ENCODE measurements at regions of chr10 and their contacts with region 1.

Region 1: GRCh38 chr10:96513698-96514561 is at the start of gene TLL2:
- DNase-seq: peak; percentile 85 to 92
- H3K4me3 ChIP-seq: peak within 1 kb of the TSS; percentile 32 to 71 (median 66)
- H3K27ac ChIP-seq: no peak within 1 kb of the TSS; the same call in 1 of the 2 replicates
- H3K4me1 ChIP-seq: peaks cover 12 to 16% (median 13%) of the 10 kb centered on the region in 4 experiments
- H3K27me3 ChIP-seq: peaks cover 10 to 29% (median 25%) of the 10 kb centered on the region in 4 experiments
- CTCF ChIP-seq: peak; percentile 60 to 84 (median 73)
- EP300 ChIP-seq: peak in 1 of 2 experiments; percentile 66; a peak in 1 of 3 replicates
- POLR2A ChIP-seq: peak in 1 of 2 experiments; percentile 60; a peak in 1 of 3 replicates
- RAD21 ChIP-seq: peak; percentile 50 to 68
- total RNA-seq, gene TLL2: 3.0 and 3.2 TPM in 2 replicates

Region 2: DNA sequence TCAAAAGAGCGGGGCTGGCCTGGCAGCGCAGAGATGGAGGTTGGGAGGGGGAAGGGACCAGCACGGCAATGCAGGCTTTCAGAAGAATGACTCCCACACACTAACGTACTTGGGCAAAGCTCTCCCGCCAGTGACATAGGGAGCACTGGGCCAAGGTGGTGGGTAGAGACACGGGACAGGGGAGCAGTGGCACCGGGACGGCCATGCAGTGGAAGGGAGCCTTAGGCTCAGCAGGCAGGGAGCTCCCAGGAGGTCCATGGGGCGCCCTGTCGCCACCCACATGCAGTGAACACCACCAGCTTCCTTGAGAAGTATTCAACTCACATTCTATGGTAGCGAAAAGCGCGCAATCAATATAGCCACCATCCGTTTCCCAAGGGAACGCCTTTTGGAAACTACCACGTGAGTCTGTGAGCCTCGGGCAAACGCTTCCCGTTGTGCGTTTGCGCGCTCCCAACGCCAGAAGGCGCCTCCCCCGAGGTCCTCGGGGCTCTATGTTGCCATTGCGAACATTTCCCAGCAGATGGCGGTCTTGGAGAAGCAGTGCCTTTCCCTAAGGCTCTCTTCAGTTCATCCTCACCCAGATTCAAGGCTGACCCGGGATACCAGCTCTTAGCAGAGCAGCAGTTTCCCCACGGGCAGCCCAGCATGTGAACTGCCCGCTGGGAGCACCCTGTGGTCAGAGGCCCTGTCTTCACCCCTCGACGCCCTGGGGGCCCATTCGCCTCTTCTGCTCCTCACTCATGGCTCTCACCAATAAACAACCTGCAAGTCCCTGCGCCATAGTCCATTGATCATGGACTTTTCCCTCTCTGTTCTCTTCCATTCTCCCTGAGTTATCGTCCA is 138.7 kb before region 1 on chr10:
- CTCF ChIA-PET with region 1: interaction called, 187 read pairs
- POLR2A ChIA-PET with region 1: interaction called, 4 read pairs
- DNase-seq: peak; percentile 80 to 93
- H3K4me3 ChIP-seq: peak overlapping the region; percentile 30 to 56 (median 47); a peak in 7 of 8 replicates
- H3K27ac ChIP-seq: no peak overlapping the region
- H3K4me1 ChIP-seq: peaks cover 0 to 13% (median 7%) of the 10 kb centered on the region in 4 experiments; a peak in 6 of 7 replicates
- H3K27me3 ChIP-seq: peaks cover 0 to 3% (median 1%) of the 10 kb centered on the region in 4 experiments; a peak in 3 of 7 replicates
- CTCF ChIP-seq: peak; percentile 95 to 100 (median 100)
- EP300 ChIP-seq: no peak
- POLR2A ChIP-seq: no peak
- RAD21 ChIP-seq: peak; percentile 95 to 96

Region 3: DNA sequence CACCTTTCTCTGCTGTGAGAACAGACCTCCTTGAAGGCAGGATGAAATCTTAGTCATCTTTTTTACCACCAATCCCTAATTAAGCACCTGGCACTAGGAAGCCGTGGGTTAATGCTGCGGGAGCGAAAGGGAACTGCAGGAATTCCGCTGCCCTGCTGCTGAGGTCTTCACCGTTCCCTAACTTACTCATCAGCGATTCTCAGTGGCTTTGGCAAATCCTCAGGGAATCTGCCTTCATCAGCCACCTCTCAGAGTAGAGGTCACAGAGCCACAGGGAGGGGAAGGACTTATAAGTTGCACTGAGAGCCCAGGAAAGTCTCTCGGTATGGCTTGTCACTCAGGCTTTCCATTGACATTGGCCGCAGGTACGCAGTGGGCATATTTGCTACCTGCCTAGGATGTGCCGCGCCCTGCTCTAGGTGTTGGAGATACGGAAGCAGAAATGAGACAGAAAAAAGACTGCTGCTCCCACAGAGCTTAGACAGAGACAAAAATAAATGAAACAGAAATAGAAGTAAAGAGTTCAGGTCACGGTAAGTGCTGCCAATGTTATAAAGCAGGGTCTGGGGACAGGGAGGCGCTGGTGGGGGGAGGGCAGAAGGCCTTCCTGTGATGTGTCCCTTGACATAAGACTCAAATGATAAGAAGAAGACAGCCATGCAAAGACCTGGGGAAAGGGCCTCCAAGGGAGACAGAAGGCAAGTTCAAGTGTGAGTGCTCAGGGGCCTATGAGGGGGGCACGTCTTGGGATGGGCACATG is 82.5 kb before region 1 on chr10:
- CTCF ChIA-PET with region 1: interaction called, 10 read pairs
- POLR2A ChIA-PET with region 1: no interaction called
- DNase-seq: peak in 1 of 2 experiments; percentile 29
- H3K4me3 ChIP-seq: no peak overlapping the region
- H3K27ac ChIP-seq: no peak overlapping the region
- H3K4me1 ChIP-seq: peaks cover 0 to 1% (median 0%) of the 10 kb centered on the region in 4 experiments; a peak in 2 of 7 replicates
- H3K27me3 ChIP-seq: no peaks in the 10 kb centered on the region
- CTCF ChIP-seq: no peak
- EP300 ChIP-seq: no peak
- POLR2A ChIP-seq: no peak
- RAD21 ChIP-seq: no peak

Region 4: DNA sequence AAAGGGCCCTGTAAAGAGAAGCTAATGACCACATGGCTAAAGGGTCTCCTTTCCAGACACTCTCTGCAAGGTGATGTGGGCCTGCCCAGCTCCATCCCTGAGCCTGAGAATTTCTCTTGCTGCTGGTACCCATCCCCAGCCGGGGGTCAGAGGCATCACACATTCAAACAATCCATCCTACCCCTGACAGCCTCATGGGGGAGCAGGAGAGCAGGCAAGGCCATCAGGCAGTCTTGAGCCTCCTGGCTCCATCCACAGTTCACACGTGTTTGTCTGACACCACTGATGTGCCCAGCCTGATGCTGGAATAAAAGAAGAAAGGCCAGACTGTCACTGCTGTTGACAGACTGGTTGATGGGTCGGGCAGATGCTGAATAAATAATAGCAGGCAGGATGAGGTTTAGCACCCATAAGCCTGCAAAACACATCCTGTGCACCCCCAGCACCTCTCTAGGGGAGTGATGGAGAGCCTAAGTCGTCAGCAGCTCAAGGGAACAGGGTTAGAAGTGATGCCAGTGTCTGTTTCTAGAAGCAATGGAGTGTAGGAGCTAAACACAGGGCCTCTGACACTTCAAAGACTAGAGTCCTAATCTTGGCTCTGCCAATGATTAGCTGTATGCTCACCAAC is 43.7 kb before region 1 on chr10:
- CTCF ChIA-PET with region 1: interaction called, 102 read pairs
- POLR2A ChIA-PET with region 1: interaction called, 3 read pairs
- DNase-seq: peak in 1 of 2 experiments; percentile 84
- H3K4me3 ChIP-seq: no peak overlapping the region
- H3K27ac ChIP-seq: no peak overlapping the region
- H3K4me1 ChIP-seq: peaks cover 2 to 6% (median 4%) of the 10 kb centered on the region in 4 experiments; a peak in 4 of 7 replicates
- H3K27me3 ChIP-seq: no peaks in the 10 kb centered on the region
- CTCF ChIP-seq: peak; percentile 82 to 94 (median 94)
- EP300 ChIP-seq: no peak
- POLR2A ChIP-seq: no peak
- RAD21 ChIP-seq: peak; percentile 56 to 76

Region 5: DNA sequence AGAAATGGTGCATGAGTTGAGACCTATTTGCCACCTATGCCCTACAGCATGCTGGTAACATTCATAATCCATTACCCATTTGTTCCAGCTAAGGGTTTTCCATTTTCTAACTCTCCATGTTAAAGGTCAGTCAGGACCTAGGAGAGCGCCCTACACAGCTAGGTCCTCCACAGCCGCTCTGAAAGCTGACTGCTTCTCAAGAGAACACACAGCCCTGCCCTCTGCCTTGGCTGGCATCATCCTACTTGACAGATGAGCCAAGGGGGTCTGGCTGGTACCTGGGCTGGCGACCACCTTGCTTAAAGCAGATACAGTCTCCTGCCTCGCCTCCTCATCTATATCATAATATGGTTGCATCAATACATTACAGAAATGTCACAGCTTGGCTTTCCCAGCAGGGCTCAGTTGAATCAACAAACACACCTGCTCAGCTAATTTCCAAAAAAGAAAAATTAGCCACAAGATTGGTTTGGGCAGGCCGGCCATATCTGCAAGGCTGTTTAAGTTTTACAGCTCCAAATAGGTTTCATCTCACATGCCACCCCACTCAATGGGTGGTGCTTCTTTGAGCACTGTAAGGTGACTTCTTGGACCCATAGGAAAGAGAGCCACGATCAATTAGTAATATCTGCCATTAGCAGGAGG is 17.5 kb before region 1 on chr10:
- CTCF ChIA-PET with region 1: interaction called, 276 read pairs
- POLR2A ChIA-PET with region 1: interaction called, 15 read pairs
- DNase-seq: peak in 1 of 2 experiments; percentile 61
- H3K4me3 ChIP-seq: no peak overlapping the region
- H3K27ac ChIP-seq: no peak overlapping the region
- H3K4me1 ChIP-seq: peaks cover 0 to 3% (median 0%) of the 10 kb centered on the region in 4 experiments; a peak in 1 of 7 replicates
- H3K27me3 ChIP-seq: no peaks in the 10 kb centered on the region
- CTCF ChIP-seq: no peak
- EP300 ChIP-seq: no peak
- POLR2A ChIP-seq: no peak
- RAD21 ChIP-seq: no peak

Region 6: DNA sequence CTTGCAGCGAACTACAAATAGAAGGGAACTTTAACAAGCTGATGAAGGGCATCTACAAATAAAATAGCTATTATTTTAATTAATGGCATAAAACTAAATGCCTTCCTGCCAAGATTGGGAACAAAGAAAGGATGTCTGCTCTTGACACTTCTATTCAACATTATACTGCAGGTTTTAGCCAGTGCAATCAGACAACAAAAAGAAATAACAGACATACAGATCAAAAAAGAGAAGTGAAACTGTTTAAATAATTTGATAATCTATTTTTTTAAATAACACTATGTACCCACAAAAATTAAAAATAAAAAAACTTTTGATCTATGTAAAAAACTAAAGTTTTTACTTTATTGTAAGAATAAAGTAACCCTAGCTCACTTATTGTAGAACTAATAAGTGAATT is 22.2 kb after region 1 on chr10:
- CTCF ChIA-PET with region 1: interaction called, 15 read pairs
- POLR2A ChIA-PET with region 1: interaction called, 3 read pairs
- DNase-seq: no peak
- H3K4me3 ChIP-seq: no peak overlapping the region
- H3K27ac ChIP-seq: no peak overlapping the region
- H3K4me1 ChIP-seq: no peaks in the 10 kb centered on the region
- H3K27me3 ChIP-seq: no peaks in the 10 kb centered on the region
- CTCF ChIP-seq: no peak
- EP300 ChIP-seq: no peak
- POLR2A ChIP-seq: no peak
- RAD21 ChIP-seq: no peak

Region 7: GRCh38 chr10:96840841-96841518 is 327.1 kb after region 1 on chr10:
- CTCF ChIA-PET with region 1: no interaction called
- POLR2A ChIA-PET with region 1: no interaction called
- DNase-seq: no peak
- H3K4me3 ChIP-seq: no peak overlapping the region
- H3K27ac ChIP-seq: no peak overlapping the region
- H3K4me1 ChIP-seq: peaks cover 0 to 9% (median 4%) of the 10 kb centered on the region in 4 experiments; a peak in 4 of 7 replicates
- H3K27me3 ChIP-seq: no peaks in the 10 kb centered on the region
- CTCF ChIP-seq: no peak
- EP300 ChIP-seq: no peak
- POLR2A ChIP-seq: no peak
- RAD21 ChIP-seq: no peak

Measured in H1 (cell line).